Caco-2 (cell line): ENCODE measurements at regions of chr15 and their contacts with region 1.

Region 1: DNA sequence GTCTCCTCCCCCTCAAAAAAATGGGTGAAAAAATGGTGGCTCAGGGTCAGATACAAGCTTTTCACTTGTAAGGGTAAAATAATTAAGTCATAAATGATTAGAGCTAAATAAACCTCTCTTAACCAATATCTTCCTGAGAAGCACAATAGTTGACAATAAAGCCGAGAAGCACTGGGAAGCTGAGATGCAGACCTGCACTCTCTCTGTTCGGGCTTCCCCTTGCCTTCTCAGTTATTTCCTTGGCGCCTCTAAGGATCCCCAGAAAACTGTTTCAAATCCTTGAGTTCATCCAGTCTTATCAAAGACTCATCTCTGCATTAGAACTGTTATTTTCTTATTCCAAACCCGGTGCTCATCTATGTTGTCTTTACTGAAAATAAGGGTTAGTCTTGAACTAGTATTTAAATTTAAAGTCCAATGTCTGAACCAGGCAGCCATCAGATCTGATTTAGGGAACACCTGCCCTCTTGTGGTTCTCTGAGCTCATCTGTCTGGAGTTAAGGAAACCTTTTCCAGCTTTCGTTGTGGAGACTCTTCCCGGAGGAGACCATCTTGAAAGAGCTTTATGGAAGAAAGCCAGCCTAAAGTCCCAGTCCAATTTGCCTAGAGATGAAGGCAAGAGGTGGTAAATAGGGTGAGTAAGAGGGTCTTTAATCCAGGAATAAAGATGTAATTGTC is 256.4 kb upstream of the MCTP2 start:
- DNase-seq: peak; percentile 50 to 52
- H3K4me3 ChIP-seq: no peak overlapping the region
- H3K4me3 Mint-ChIP-seq: no peak overlapping the region
- H3K27ac Mint-ChIP-seq: no peak overlapping the region
- H3K4me1 ChIP-seq: no peaks in the 10 kb centered on the region
- H3K4me1 Mint-ChIP-seq: no peaks in the 10 kb centered on the region
- H3K27me3 ChIP-seq: no peaks in the 10 kb centered on the region
- H3K27me3 Mint-ChIP-seq: peaks cover 6% of the 10 kb centered on the region
- CTCF ChIP-seq: peak; percentile 52 to 67

Region 2: GRCh38 chr15:93030430-93031105 is 944.4 kb before region 1 on chr15:
- CTCF ChIA-PET with region 1: interaction called, 11 read pairs
- POLR2A ChIA-PET with region 1: no interaction called
- intact Hi-C with region 1: loop called (anchors 5 kb)
- DNase-seq: peak; percentile 60 to 74
- H3K4me3 ChIP-seq: no peak overlapping the region
- H3K4me3 Mint-ChIP-seq: no peak overlapping the region
- H3K27ac Mint-ChIP-seq: peak overlapping the region; percentile 87
- H3K4me1 ChIP-seq: no peaks in the 10 kb centered on the region
- H3K4me1 Mint-ChIP-seq: peaks cover 18% of the 10 kb centered on the region
- H3K27me3 ChIP-seq: no peaks in the 10 kb centered on the region
- H3K27me3 Mint-ChIP-seq: no peaks in the 10 kb centered on the region
- CTCF ChIP-seq: peak; percentile 76 to 84

Region 3: DNA sequence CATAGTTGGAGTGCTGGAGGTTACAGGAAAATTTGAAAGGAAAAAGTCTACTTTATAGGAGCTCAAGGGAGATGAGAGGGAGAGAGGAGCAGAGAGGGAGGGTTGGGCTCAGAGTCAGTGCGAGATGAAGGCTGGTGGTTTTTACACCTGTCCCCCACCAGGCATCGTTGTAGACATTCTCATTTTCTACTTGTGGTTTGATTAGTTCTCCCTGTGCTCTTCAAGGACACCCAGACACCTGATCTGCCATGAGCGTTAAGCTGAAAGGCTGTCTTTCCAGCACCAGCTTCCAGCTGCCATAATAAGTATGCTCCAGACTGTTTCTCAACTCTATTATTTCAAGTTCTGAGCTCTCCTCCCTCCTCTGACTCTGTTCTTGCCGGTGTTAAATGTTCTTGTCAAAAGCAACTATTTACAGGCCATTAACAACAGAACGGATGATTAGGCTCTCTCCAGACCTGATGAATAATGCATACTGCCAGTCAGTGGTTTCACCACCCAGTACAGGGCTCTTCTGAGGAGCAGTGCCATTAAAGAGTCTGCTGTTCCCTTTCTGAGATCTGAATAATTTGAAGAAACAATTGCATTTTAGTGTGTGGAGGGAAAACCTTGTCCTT is 258.2 kb before region 1 on chr15:
- CTCF ChIA-PET with region 1: no interaction called
- POLR2A ChIA-PET with region 1: no interaction called
- intact Hi-C with region 1: loop called (anchors 10 kb)
- DNase-seq: no peak
- H3K4me3 ChIP-seq: no peak overlapping the region
- H3K4me3 Mint-ChIP-seq: no peak overlapping the region
- H3K27ac Mint-ChIP-seq: no peak overlapping the region
- H3K4me1 ChIP-seq: no peaks in the 10 kb centered on the region
- H3K4me1 Mint-ChIP-seq: no peaks in the 10 kb centered on the region
- H3K27me3 ChIP-seq: no peaks in the 10 kb centered on the region; the same call in 1 of the 2 replicates
- H3K27me3 Mint-ChIP-seq: peaks cover 9% of the 10 kb centered on the region
- CTCF ChIP-seq: no peak

Region 4: DNA sequence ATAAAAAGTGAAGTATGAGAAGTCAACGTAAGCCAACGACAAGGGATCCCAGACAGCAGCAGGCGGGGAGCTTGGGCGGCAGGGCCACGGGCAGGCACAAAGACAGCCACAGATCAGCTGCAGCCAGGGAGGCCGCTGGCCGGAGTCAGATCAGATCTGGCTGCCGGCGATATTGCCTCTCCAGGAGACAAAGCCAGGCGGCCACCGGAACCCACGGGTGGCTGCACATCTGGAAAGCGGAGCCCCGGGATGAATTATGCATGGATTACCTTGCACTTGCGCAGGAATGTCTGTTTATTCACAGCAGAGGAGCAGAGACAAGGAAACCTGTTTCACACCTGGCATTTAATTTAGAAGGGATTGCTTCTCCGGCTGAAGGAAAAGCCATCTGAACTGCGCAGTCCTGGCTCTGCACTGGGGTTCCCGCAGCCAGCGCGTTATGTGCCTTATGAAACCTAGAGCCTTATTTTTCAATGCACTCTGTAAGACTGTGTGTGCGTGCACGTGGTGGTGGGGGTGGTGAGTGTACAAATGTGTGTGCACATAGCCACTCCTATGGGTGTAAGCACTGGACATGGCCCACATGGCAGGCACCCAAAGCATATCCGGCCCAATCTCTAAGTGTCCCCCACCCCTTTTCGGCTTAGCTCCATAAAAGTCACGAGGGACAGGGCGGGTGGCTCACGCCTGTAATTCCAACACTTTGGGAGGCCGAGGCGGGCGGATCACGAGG is 171.4 kb before region 1 on chr15:
- CTCF ChIA-PET with region 1: interaction called, 3 read pairs
- POLR2A ChIA-PET with region 1: no interaction called
- intact Hi-C with region 1: loop called (anchors 5 kb)
- DNase-seq: no peak
- H3K4me3 ChIP-seq: no peak overlapping the region
- H3K4me3 Mint-ChIP-seq: no peak overlapping the region
- H3K27ac Mint-ChIP-seq: no peak overlapping the region
- H3K4me1 ChIP-seq: no peaks in the 10 kb centered on the region
- H3K4me1 Mint-ChIP-seq: no peaks in the 10 kb centered on the region
- H3K27me3 ChIP-seq: no peaks in the 10 kb centered on the region
- H3K27me3 Mint-ChIP-seq: no peaks in the 10 kb centered on the region
- CTCF ChIP-seq: no peak

Region 5: GRCh38 chr15:93882141-93882540 is 92.8 kb before region 1 on chr15:
- CTCF ChIA-PET with region 1: interaction called, 3 read pairs
- POLR2A ChIA-PET with region 1: no interaction called
- intact Hi-C with region 1: loop called (anchors 10 kb)
- DNase-seq: no peak
- H3K4me3 ChIP-seq: no peak overlapping the region
- H3K4me3 Mint-ChIP-seq: no peak overlapping the region
- H3K27ac Mint-ChIP-seq: no peak overlapping the region
- H3K4me1 ChIP-seq: no peaks in the 10 kb centered on the region
- H3K4me1 Mint-ChIP-seq: no peaks in the 10 kb centered on the region
- H3K27me3 ChIP-seq: no peaks in the 10 kb centered on the region
- H3K27me3 Mint-ChIP-seq: peaks cover 2% of the 10 kb centered on the region
- CTCF ChIP-seq: no peak